Heart right ventricle (tissue), 16 donors: ENCODE measurements at regions of chr20 and their contacts with region 1.

Region 1: GRCh38 chr20:63955827-63956663 is at the start of gene UCKL1:
- DNase-seq: peak; percentile 92 to 93
- ATAC-seq: peak; percentile 81 to 91 (median 85)
- H3K4me3 ChIP-seq: peak within 1 kb of the TSS; percentile 76 to 100 (median 96)
- H3K27ac ChIP-seq: peak within 1 kb of the TSS; percentile 92 to 98 (median 96)
- H3K4me1 ChIP-seq: peaks cover 25 to 65% (median 59%) of the 10 kb centered on the region in 9 donors
- H3K27me3 ChIP-seq: no peaks in the 10 kb centered on the region
- CTCF ChIP-seq: peak in 5 of 9 donors; percentile 5 to 43 (median 23)
- total RNA-seq, gene UCKL1: 27.3 to 70.4 (median 39.0) TPM

Region 2: GRCh38 chr20:63553227-63553932 is 402.7 kb before region 1 on chr20:
- intact Hi-C with region 1: loop called in 1 of 10 experiments (anchors 5 kb)
- DNase-seq: peak; percentile 85
- ATAC-seq: peak; percentile 74 to 91 (median 82)
- H3K4me3 ChIP-seq: peak overlapping the region in 9 of 10 donors; percentile 46 to 69 (median 64)
- H3K27ac ChIP-seq: peak overlapping the region in 4 of 10 donors; percentile 21 to 70 (median 39)
- H3K4me1 ChIP-seq: peaks cover 0 to 19% (median 10%) of the 10 kb centered on the region in 9 donors
- H3K27me3 ChIP-seq: peaks cover 0 to 53% (median 17%) of the 10 kb centered on the region in 7 donors
- CTCF ChIP-seq: no peak

Region 3: GRCh38 chr20:63894358-63895201 is 61.5 kb before region 1 on chr20 and contains the start of gene DNAJC5:
- intact Hi-C with region 1: loop called in 1 of 10 experiments (anchors 5 kb)
- DNase-seq: peak; percentile 94 to 98
- ATAC-seq: peak; percentile 95 to 98 (median 97)
- H3K4me3 ChIP-seq: peak within 1 kb of the TSS; percentile 50 to 70 (median 64)
- H3K27ac ChIP-seq: peak within 1 kb of the TSS; percentile 23 to 93 (median 85)
- H3K4me1 ChIP-seq: peaks cover 11 to 53% (median 47%) of the 10 kb centered on the region in 9 donors
- H3K27me3 ChIP-seq: no peaks in the 10 kb centered on the region
- CTCF ChIP-seq: no peak
- total RNA-seq, gene DNAJC5: 32.8 to 52.2 (median 38.5) TPM

Region 4: DNA sequence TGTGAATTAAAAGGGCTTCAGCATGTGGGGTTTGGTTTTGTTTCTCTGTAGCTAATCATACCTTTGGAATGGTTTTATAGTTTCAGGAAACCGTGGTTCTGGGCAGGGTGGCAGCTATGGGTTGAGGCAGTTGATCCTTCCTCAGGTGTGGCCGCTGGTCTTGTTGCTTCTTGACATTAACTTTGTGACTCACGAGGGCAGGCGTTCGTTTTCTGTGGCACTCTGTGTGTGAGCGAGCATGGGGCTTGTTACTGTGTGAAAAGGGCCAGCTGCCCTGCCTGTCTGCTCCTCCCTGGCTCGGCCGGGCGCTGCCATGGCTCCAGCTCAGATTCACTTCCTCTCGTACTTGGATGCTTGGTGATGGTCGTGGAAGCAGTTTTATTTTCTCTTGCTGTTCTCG is 44.9 kb before region 1 on chr20:
- intact Hi-C with region 1: loop called in 1 of 10 experiments (anchors 1 kb)
- DNase-seq: no peak
- ATAC-seq: peak in 3 of 8 donors; percentile 29 to 32 (median 30)
- H3K4me3 ChIP-seq: no peak overlapping the region
- H3K27ac ChIP-seq: no peak overlapping the region
- H3K4me1 ChIP-seq: peaks cover 0 to 67% (median 50%) of the 10 kb centered on the region in 9 donors
- H3K27me3 ChIP-seq: no peaks in the 10 kb centered on the region
- CTCF ChIP-seq: no peak